Activated CD4-positive, alpha-beta T cell treated with anti-CD3 and anti-CD28 coated beads for 36 hours (primary cell): ENCODE measurements at regions of chr21 and their contacts with region 1.

Region 1: DNA sequence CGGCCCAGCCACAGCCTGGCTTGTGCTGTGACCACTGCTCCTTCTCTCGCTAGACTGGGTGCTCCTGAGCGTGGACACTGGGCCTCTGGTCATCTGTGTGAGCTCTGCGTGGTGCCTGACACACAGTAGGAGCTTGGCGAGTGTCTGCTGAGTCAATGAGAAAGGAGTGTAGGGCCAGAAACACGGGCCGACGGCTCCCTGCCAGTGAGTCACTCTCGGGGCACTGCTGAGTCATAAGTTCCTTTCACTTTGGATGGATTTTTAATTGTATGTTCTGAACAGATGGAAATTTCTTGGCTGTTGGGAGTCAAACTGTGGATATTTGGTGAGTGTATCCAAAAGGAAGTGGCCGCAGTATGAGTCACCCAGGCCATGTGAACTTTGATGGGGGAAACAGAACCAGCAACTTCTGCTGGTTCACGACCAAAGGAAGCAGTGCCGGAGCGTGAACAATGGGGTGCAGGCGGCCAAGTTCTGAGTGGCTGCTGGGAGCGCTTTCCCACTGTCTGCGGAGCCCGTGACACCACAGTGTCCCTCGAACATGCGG is 41.0 kb upstream of the COL18A1 start:
- DNase-seq: peak; percentile 78
- ATAC-seq: peak; percentile 92
- H3K4me3 Mint-ChIP-seq: no peak overlapping the region
- H3K27ac Mint-ChIP-seq: peak overlapping the region; percentile 52
- H3K4me1 Mint-ChIP-seq: peaks cover 10% of the 10 kb centered on the region
- H3K27me3 Mint-ChIP-seq: peaks cover 2% of the 10 kb centered on the region

Region 2: DNA sequence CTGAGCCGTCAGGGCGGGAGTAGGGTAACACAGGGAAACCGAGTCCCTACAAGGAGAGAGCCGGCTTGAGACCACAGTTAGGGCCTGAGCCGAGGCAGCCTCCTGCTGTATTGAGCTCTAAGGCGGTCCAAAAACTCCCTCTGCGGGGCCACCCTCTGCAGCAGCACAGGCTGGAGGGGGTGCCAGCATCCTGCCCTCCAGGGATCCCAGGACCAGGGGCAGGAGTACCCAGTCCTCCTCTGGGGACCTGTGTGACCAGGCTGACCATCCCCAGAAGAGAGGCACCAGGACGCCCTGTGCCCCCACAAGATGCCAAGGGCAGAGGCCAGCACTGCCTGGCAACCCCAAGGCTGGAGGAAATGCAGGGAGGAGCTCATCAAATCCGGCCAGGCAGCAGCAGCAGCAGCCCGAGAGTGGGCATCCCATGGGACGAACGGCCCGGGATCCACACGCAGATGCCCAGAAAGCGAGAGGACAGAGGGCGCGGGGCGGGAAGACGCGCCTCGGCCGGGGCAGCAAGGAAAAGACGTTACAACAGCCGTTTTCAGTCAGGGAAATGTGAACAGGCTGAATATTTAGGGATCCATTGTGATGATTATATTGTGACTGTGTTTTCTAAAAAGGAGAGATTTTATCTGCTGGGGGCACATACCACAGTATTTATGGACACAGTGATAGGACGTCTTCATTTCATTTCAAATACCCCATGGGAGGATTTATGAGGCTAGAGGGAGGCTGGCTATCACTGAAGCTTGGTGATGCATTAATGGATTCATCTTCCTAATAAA is 16.1 kb before region 1 on chr21:
- CTCF ChIA-PET with region 1: no interaction called
- POLR2A ChIA-PET with region 1: no interaction called
- intact Hi-C with region 1: no loop called
- DNase-seq: no peak
- ATAC-seq: no peak
- H3K4me3 Mint-ChIP-seq: no peak overlapping the region
- H3K27ac Mint-ChIP-seq: no peak overlapping the region
- H3K4me1 Mint-ChIP-seq: no peaks in the 10 kb centered on the region
- H3K27me3 Mint-ChIP-seq: peaks cover 2% of the 10 kb centered on the region

Region 3: DNA sequence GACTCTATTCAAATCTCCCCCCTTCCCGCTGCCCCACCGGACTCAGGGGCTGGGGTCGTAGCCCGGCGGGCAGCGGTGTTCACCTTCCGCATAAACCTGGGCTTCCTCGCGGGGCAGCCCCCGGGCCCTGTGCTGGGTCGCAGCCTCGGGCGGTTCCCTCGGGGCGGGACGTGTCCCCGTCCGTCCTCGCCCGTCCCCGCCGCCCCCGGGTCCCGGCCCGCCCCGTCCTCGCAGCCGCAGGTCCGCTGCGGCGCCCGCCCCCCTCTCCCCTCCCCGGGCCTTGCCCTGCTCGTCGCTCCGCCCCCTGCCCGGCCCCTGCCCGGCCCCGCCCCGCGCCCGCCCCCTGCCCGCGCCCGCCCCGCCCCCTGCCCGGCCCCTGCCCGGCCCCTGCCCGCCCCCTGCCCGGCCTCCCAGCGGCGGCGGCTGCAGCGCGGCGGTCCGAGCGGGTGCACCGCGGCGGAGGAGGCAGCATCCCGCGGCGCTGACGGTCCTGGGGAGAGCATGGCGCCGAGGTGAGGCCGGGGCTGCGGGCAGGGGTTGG is 40.8 kb after region 1 on chr21 and contains the start of gene COL18A1:
- CTCF ChIA-PET with region 1: no interaction called
- POLR2A ChIA-PET with region 1: no interaction called
- intact Hi-C with region 1: loop called in 1 of 2 experiments (anchors 2 kb)
- DNase-seq: peak; percentile 70
- ATAC-seq: peak; percentile 55
- H3K4me3 Mint-ChIP-seq: peak within 1 kb of the TSS; percentile 69
- H3K27ac Mint-ChIP-seq: no peak within 1 kb of the TSS
- H3K4me1 Mint-ChIP-seq: peaks cover 13% of the 10 kb centered on the region
- H3K27me3 Mint-ChIP-seq: peaks cover 43% of the 10 kb centered on the region
- total RNA-seq, gene COL18A1: 8.0 to 8.8 TPM